ENCODE measurements at regions of chr16 and their contacts with region 1.

Region 1: GRCh38 chr16:4330277-4330874 is 14.5 kb downstream of the GLIS2 start:
- DNase-seq: no peak
- ATAC-seq: peak; percentile 94
- H3K4me3 ChIP-seq: no peak overlapping the region
- H3K27ac ChIP-seq: no peak overlapping the region
- H3K4me1 ChIP-seq: peaks cover 2 to 22% of the 10 kb centered on the region in 2 experiments; a peak in 2 of 4 replicates
- H3K27me3 ChIP-seq: no peaks in the 10 kb centered on the region
- CTCF ChIP-seq: peak; percentile 87 to 98 (median 94)
- POLR2A ChIP-seq: no peak
- RAD21 ChIP-seq: peak; percentile 98

Region 2: GRCh38 chr16:3983081-3983520 is 347.3 kb before region 1 on chr16:
- CTCF ChIA-PET with region 1: interaction called, 6 read pairs
- POLR2A ChIA-PET with region 1: no interaction called
- RAD21 ChIA-PET with region 1: interaction called in 1 of 2 experiments, 3 read pairs
- intact Hi-C with region 1: loop called (anchors 2 kb)
- DNase-seq: peak; percentile 60
- ATAC-seq: peak; percentile 94
- H3K4me3 ChIP-seq: no peak overlapping the region
- H3K27ac ChIP-seq: no peak overlapping the region
- H3K4me1 ChIP-seq: peaks cover 10 to 16% of the 10 kb centered on the region in 2 experiments
- H3K27me3 ChIP-seq: no peaks in the 10 kb centered on the region
- CTCF ChIP-seq: peak; percentile 78 to 96 (median 86)
- POLR2A ChIP-seq: no peak
- RAD21 ChIP-seq: peak; percentile 99

Region 3: GRCh38 chr16:4261557-4262172 is 68.7 kb before region 1 on chr16:
- CTCF ChIA-PET with region 1: interaction called, 5 read pairs
- POLR2A ChIA-PET with region 1: no interaction called
- RAD21 ChIA-PET with region 1: interaction called in 1 of 2 experiments, 5 read pairs
- intact Hi-C with region 1: loop called (anchors 1 kb)
- DNase-seq: peak; percentile 22
- ATAC-seq: peak; percentile 76
- H3K4me3 ChIP-seq: no peak overlapping the region
- H3K27ac ChIP-seq: no peak overlapping the region
- H3K4me1 ChIP-seq: peaks cover 0 to 15% of the 10 kb centered on the region in 2 experiments; a peak in 3 of 4 replicates
- H3K27me3 ChIP-seq: no peaks in the 10 kb centered on the region
- CTCF ChIP-seq: peak; percentile 59 to 91 (median 90); a peak in 5 of 6 replicates
- POLR2A ChIP-seq: no peak
- RAD21 ChIP-seq: peak; percentile 77

Region 4: DNA sequence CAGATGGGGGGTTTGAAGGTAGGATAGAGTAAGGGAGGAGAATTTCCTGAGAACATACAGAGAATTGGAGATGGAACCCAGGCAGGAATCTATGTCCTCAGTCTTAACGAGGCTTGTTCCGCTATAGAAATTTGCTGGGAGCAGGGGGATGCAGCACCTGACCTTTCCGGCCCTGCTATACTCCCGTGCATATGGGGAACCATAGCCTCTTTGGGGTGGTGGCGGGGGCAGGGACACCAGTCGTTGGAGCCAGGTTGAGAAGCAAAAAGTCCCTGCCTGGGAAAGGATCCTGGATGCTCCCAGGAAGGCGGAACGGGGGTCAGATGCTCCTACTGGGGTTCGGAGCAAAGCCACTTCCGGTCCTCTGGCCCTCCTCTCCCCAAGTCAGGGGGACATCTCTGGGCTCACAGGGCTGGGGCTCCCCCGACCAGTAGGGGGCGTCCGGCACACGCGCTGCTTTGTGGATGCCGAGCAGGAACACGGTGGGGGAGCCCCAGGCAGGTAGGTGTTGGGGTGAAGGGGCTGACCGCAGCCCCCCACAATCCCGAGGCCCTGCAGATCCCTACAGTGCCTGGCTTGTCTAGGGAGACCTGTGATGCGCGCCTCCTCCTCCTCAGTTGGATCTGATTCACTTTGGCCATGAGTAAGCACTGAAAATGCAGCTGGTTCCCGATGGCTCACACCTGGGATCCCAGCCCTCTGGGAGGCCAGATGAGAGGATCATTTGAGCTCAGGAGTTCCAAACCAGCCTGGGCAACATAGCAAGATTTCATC is 42.0 kb before region 1 on chr16:
- CTCF ChIA-PET with region 1: interaction called, 10 read pairs
- POLR2A ChIA-PET with region 1: no interaction called
- RAD21 ChIA-PET with region 1: interaction called, 4 to 5 read pairs
- intact Hi-C with region 1: loop called (anchors 1 kb)
- DNase-seq: no peak
- ATAC-seq: peak; percentile 85
- H3K4me3 ChIP-seq: peak overlapping the region in 1 of 2 experiments; percentile 20; a peak in 2 of 4 replicates
- H3K27ac ChIP-seq: no peak overlapping the region; the same call in 1 of the 2 replicates
- H3K4me1 ChIP-seq: peaks cover 48 to 75% of the 10 kb centered on the region in 2 experiments
- H3K27me3 ChIP-seq: no peaks in the 10 kb centered on the region
- CTCF ChIP-seq: peak; percentile 88 to 99 (median 98)
- POLR2A ChIP-seq: no peak
- RAD21 ChIP-seq: peak; percentile 95

Region 5: DNA sequence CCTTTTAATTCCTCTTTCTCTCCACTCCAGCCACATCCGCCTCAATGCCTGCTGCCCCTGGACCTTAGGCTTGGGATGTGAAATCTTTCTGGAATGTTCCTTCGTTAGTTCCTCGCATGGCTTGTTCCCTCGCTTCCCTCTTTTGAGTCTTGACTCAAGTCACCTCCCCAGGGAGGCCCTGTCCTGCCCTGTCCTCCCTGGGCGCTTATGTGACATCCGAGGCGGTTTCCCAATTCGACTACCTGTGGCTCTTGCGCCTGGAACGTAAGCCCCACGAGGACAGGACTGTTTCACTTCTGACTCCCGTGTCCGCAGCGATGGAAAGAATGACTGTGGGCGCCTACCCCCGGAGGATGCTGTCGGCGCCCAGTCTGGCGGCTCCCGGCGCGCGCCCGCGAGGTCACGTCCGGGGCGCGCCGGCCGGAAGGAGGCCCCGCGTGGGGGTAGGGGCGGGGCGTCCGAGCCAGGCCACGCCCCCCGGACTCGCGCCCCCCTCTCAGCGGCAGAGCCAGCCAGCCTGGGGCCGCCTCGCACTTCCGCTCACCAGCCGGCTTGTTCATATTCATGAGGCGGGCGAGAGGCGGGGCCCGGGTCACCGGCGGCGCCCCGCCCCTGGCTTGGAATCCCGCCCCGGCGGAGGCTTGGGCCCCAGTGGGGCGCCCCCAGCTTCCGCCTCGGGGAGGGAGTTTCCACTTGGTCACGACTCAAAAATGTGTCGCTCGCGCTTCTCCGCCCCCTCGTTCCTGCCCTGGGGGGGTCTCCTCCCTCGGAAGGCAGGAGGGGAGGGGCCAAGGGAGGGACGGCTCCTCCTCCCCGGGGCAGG is 22.9 kb before region 1 on chr16:
- CTCF ChIA-PET with region 1: interaction called, 12 read pairs
- POLR2A ChIA-PET with region 1: no interaction called
- RAD21 ChIA-PET with region 1: no interaction called
- intact Hi-C with region 1: no loop called
- DNase-seq: peak; percentile 92
- ATAC-seq: peak; percentile 89
- H3K4me3 ChIP-seq: peak overlapping the region; percentile 63 to 80
- H3K27ac ChIP-seq: peak overlapping the region; percentile 45
- H3K4me1 ChIP-seq: peaks cover 20 to 44% of the 10 kb centered on the region in 2 experiments
- H3K27me3 ChIP-seq: no peaks in the 10 kb centered on the region
- CTCF ChIP-seq: no peak
- POLR2A ChIP-seq: peak; percentile 27
- RAD21 ChIP-seq: no peak

Region 6: GRCh38 chr16:4435337-4436067 is 105.1 kb after region 1 on chr16:
- CTCF ChIA-PET with region 1: no interaction called
- POLR2A ChIA-PET with region 1: no interaction called
- RAD21 ChIA-PET with region 1: no interaction called
- intact Hi-C with region 1: no loop called
- DNase-seq: no peak
- ATAC-seq: no peak
- H3K4me3 ChIP-seq: no peak overlapping the region
- H3K27ac ChIP-seq: no peak overlapping the region
- H3K4me1 ChIP-seq: no peaks in the 10 kb centered on the region
- H3K27me3 ChIP-seq: no peaks in the 10 kb centered on the region
- CTCF ChIP-seq: no peak
- POLR2A ChIP-seq: no peak
- RAD21 ChIP-seq: no peak

Measured in HCT116 (cell line).